Caco-2 (cell line): ENCODE measurements at regions of chr18 and their contacts with region 1.

Region 1: GRCh38 chr18:25557011-25557410 is 205.0 kb upstream of the ZNF521 start:
- DNase-seq: no peak
- H3K4me3 ChIP-seq: no peak overlapping the region
- H3K4me3 Mint-ChIP-seq: no peak overlapping the region
- H3K27ac Mint-ChIP-seq: no peak overlapping the region
- H3K4me1 ChIP-seq: no peaks in the 10 kb centered on the region
- H3K4me1 Mint-ChIP-seq: no peaks in the 10 kb centered on the region
- H3K27me3 ChIP-seq: no peaks in the 10 kb centered on the region
- H3K27me3 Mint-ChIP-seq: peaks cover 6% of the 10 kb centered on the region
- CTCF ChIP-seq: no peak

Region 2: DNA sequence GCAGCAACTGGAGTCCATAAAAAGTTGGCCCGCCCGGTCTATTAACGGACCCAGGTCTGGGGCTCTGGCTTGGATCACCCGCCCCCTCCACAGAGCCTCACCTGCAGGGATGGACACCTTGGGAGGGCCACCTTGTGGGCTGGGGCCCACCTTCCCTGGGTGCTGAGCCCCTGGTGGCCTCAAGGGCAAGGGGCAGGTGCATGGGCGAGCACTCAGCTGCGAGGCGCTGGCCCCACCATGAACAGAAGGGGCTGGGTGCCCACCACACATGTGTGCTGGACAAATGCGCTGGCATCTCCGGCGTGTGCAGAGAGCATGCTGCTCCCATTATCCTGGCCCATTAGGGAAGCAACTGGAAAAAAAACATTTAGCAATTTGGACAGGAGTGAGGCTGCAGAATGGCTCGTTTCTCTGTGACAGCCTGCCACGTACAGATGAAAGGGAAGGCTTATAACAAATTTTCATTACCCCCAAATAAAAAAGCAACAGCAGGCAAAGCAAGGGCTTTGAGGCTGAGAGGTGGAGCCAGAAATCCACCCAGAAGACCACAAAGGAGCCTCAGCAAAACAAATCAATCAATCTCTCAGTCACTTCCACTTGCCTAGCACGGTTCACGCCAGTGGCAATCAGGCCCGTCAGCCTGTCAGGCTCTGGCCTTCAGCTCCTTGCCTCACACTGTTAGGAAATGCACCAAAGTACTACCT is 48.0 kb after region 1 on chr18:
- CTCF ChIA-PET with region 1: no interaction called
- POLR2A ChIA-PET with region 1: no interaction called
- intact Hi-C with region 1: loop called (anchors 2 kb)
- DNase-seq: no peak
- H3K4me3 ChIP-seq: no peak overlapping the region
- H3K4me3 Mint-ChIP-seq: no peak overlapping the region
- H3K27ac Mint-ChIP-seq: no peak overlapping the region
- H3K4me1 ChIP-seq: no peaks in the 10 kb centered on the region
- H3K4me1 Mint-ChIP-seq: no peaks in the 10 kb centered on the region
- H3K27me3 ChIP-seq: no peaks in the 10 kb centered on the region
- H3K27me3 Mint-ChIP-seq: peaks cover 14% of the 10 kb centered on the region
- CTCF ChIP-seq: no peak